Activated CD4-positive, alpha-beta T cell treated with anti-CD3 and anti-CD28 coated beads for 36 hours (primary cell): ENCODE measurements at regions of chr18 and their contacts with region 1.

Region 1: DNA sequence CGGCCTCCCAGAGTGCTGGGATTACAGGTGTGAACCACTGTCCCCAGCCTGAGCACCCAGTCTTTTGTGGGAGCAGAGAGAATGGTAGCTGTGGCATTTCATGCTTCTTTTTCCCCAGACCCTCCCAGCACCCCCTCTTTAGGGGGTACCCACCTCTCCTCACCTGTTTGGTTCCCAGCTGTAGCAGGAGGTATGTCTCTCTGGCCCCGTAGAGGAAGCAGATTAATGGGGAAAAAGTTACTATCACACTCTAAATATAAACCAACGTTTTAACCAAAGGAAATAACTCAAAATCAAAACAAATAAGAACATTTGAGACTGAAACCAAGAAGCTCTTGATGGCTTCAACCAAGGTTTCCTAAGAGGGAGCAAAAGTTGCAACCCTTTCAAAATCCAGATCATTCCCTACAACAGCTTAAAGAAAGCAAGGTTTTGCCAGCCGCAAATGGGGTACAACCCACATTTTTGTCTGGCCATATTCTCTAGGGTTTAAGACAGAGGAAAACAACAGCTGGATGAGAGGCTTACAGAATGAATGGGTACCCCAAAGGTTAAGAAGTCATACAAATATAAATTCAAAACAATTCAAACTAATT is 8.0 kb downstream of the RNF125 start:
- DNase-seq: no peak
- ATAC-seq: peak; percentile 43
- H3K4me3 Mint-ChIP-seq: peak overlapping the region; percentile 44
- H3K27ac Mint-ChIP-seq: peak overlapping the region; percentile 70
- H3K4me1 Mint-ChIP-seq: peaks cover 72% of the 10 kb centered on the region
- H3K27me3 Mint-ChIP-seq: no peaks in the 10 kb centered on the region

Region 2: DNA sequence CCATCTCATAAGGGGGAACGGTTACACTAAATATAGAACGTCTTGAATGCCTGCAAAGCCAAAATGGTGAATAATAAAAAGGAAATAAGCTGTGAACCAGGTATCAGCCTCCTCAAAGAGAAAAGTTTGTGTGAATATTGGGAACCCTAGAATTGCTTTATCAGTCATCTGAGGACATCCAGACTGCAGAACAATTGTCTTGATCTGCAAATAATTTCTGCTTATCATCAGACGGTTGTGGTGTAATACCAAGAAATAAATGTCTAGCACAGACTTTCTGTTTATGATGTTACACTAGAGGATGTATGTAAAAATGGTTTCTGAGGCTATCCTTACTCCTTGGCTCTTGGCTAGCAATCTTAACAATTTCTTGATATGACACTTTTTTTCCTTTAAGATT is 212.5 kb before region 1 on chr18:
- CTCF ChIA-PET with region 1: no interaction called
- POLR2A ChIA-PET with region 1: no interaction called
- intact Hi-C with region 1: no loop called
- DNase-seq: no peak
- ATAC-seq: no peak
- H3K4me3 Mint-ChIP-seq: no peak overlapping the region
- H3K27ac Mint-ChIP-seq: no peak overlapping the region
- H3K4me1 Mint-ChIP-seq: no peaks in the 10 kb centered on the region
- H3K27me3 Mint-ChIP-seq: peaks cover 4% of the 10 kb centered on the region

Region 3: DNA sequence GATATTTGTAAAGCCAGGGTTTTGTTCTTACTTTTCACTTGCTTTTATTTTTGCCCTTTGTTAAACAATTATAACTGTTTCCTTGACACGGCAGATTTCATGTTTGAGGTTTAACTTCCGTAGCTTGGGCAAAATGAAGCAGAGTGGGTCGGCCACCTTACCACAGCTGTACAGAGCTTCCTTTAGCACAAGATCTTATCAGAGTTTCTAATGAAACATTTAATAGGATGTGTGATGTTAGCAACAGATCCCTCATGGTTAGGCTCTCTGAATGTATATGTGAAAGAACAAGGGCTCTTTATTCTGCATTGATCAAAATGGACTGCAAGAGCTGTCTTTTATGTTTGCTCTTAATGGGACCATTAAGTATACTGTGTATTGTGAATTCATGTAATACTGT is 14.3 kb after region 1 on chr18:
- CTCF ChIA-PET with region 1: interaction called, 7 read pairs
- POLR2A ChIA-PET with region 1: interaction called, 4 read pairs
- intact Hi-C with region 1: loop called in 1 of 2 experiments (anchors 2 kb)
- DNase-seq: peak; percentile 58
- ATAC-seq: peak; percentile 67
- H3K4me3 Mint-ChIP-seq: peak overlapping the region; percentile 47
- H3K27ac Mint-ChIP-seq: peak overlapping the region; percentile 87
- H3K4me1 Mint-ChIP-seq: peaks cover 58% of the 10 kb centered on the region
- H3K27me3 Mint-ChIP-seq: no peaks in the 10 kb centered on the region